Activated CD4-positive, alpha-beta T cell treated with anti-CD3 and anti-CD28 coated beads, Interleukin-2, amount 10 ng/mL, durations not matched to agents 24 days and 14 days (primary cell): ENCODE measurements at regions of chr2 and their contacts with region 1.

Region 1: GRCh38 chr2:17672583-17673317 is 80.9 kb downstream of the SMC6 start:
- DNase-seq: no peak
- H3K4me3 Mint-ChIP-seq: no peak overlapping the region
- H3K27ac Mint-ChIP-seq: no peak overlapping the region
- H3K4me1 Mint-ChIP-seq: peaks cover 3% of the 10 kb centered on the region
- H3K27me3 Mint-ChIP-seq: no peaks in the 10 kb centered on the region

Region 2: DNA sequence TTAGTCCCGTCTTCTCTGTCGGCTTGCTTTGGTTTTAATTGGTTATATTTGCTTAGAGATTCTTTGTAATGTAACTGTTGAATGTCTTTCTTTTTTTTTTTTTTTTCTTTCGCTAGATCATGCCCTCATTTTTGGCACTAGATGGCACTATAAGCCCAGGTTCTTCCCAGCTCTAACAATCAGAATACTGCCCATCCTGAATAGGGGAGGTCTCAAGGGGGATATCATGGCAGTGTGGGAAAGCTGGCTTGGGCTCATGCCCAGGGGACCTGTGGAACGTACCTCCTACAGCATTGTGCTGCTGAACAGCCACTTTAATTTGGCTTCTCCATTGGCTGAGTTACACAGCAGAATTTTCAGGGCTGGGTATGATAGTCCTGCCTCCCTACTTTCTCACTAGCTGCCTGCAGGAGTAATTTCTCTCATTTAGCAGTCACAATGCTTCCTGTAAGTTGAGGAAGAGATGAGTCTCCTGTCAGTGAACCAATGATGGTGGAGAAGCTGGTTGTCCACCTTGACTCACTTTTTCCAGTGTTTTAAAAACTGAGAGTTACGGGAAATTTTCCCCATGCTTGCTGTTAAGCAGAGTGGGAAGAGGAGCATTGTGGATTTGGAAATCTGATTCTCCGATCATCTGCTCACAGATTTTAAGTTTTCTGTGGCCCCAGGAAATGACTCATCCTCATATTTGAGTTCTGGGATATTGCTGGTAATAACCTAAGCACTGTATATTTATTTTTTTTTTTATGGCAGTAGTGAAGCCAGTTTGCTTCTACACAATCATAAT is 201.7 kb before region 1 on chr2:
- intact Hi-C with region 1: loop called (anchors 10 kb)
- DNase-seq: no peak
- H3K4me3 Mint-ChIP-seq: no peak overlapping the region
- H3K27ac Mint-ChIP-seq: no peak overlapping the region
- H3K4me1 Mint-ChIP-seq: no peaks in the 10 kb centered on the region
- H3K27me3 Mint-ChIP-seq: no peaks in the 10 kb centered on the region